Activated CD4-positive, alpha-beta T cell treated with anti-CD3 and anti-CD28 coated beads for 36 hours (primary cell): ENCODE measurements at regions of chr2 and their contacts with region 1.

Region 1: GRCh38 chr2:47323009-47323821 is 79.7 kb upstream of the MSH2 start:
- DNase-seq: peak; percentile 82
- ATAC-seq: peak; percentile 98
- H3K4me3 Mint-ChIP-seq: no peak overlapping the region
- H3K27ac Mint-ChIP-seq: no peak overlapping the region
- H3K4me1 Mint-ChIP-seq: no peaks in the 10 kb centered on the region
- H3K27me3 Mint-ChIP-seq: peaks cover 2% of the 10 kb centered on the region

Region 2: DNA sequence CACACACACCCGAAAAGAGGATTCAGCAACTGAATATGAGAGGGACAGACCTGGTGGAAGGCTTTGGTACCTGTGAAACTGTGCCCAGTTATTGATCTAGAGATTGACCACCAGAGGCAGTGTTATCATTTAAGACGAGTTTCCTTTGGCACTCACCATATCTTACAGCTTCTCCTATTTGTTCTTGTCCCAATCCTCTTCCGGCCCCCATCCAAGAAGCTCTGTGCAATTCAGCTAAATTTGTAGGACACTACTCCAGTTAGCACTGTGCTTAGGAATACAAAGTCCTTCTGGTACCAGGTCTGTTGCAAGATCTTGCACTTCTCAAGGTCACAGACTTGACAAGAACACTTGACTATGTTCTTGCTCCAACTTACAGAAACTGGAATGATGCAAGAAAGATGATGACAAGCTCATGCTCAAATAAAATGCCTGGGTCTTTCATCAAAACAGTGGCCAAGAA is 666.1 kb before region 1 on chr2:
- CTCF ChIA-PET with region 1: no interaction called
- POLR2A ChIA-PET with region 1: no interaction called
- intact Hi-C with region 1: loop called (anchors 5 to 10 kb)
- DNase-seq: no peak
- ATAC-seq: peak; percentile 66
- H3K4me3 Mint-ChIP-seq: no peak overlapping the region
- H3K27ac Mint-ChIP-seq: no peak overlapping the region
- H3K4me1 Mint-ChIP-seq: no peaks in the 10 kb centered on the region
- H3K27me3 Mint-ChIP-seq: peaks cover 7% of the 10 kb centered on the region

Region 3: DNA sequence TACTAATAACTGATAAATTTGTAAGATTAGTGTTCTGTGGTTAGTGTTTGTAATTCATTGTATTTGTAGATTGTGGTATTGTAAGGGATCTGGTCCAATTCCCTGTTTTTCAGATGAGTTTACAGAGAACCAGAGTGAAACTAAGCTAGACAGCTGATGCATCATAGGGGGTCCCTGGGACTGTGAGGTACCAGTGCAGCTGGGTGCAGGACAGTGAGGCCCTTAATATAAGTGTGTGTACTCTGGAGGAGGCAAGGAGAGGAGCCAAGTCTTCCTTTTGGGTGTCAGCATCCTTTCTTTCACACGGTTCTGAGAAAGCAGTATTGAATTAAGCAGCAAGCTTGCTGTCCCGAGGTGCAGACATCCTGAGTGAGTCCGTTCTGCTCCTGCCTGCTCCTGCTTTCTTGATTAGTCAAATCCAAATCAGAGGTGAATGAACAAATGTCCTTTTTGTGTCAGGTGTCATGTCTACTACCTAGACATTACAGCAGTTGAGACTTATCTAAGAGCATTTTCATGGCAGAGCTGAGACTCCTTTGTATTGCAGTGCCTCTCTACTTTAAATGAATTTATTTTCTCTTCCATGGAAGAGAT is 602.5 kb before region 1 on chr2:
- CTCF ChIA-PET with region 1: no interaction called
- POLR2A ChIA-PET with region 1: no interaction called
- intact Hi-C with region 1: no loop called
- DNase-seq: no peak
- ATAC-seq: peak; percentile 44
- H3K4me3 Mint-ChIP-seq: no peak overlapping the region
- H3K27ac Mint-ChIP-seq: no peak overlapping the region
- H3K4me1 Mint-ChIP-seq: peaks cover 69% of the 10 kb centered on the region
- H3K27me3 Mint-ChIP-seq: no peaks in the 10 kb centered on the region

Region 4: DNA sequence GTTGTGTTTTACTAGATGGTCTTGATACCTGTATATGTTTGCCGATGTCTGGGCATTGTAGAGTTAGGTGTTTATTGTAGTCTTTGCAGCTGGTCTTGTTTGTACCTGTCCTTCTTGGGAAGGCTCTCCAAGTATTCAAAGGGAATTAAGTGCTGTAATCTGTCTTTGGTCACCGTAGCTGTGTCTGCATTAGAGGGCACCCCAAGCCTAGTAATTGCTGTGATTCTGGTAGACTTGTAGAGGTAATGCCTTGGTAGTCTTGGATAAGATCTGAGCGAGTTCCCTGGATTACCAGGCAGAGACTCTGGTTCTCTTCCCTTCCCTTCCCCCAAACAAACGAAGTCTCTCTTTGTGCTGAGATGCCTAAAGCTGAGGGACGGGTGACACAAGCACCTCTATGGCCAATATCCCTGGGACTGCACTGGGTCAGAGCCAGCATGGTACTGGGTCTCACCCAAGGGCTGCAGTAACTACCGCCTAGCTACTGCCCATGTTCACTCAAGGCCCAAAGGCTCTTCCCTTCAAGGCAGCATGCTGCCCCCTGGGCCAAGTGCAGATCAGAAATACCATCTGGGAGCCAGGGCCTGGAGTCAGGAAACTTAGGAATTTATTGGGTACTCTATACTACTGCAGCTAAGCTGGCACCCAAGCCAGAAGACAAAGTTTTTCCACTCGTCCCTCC is 195.2 kb before region 1 on chr2:
- CTCF ChIA-PET with region 1: interaction called, 3 read pairs
- POLR2A ChIA-PET with region 1: no interaction called
- intact Hi-C with region 1: loop called in 1 of 2 experiments (anchors 5 kb)
- DNase-seq: no peak
- ATAC-seq: no peak
- H3K4me3 Mint-ChIP-seq: no peak overlapping the region
- H3K27ac Mint-ChIP-seq: no peak overlapping the region
- H3K4me1 Mint-ChIP-seq: no peaks in the 10 kb centered on the region
- H3K27me3 Mint-ChIP-seq: peaks cover 5% of the 10 kb centered on the region

Region 5: DNA sequence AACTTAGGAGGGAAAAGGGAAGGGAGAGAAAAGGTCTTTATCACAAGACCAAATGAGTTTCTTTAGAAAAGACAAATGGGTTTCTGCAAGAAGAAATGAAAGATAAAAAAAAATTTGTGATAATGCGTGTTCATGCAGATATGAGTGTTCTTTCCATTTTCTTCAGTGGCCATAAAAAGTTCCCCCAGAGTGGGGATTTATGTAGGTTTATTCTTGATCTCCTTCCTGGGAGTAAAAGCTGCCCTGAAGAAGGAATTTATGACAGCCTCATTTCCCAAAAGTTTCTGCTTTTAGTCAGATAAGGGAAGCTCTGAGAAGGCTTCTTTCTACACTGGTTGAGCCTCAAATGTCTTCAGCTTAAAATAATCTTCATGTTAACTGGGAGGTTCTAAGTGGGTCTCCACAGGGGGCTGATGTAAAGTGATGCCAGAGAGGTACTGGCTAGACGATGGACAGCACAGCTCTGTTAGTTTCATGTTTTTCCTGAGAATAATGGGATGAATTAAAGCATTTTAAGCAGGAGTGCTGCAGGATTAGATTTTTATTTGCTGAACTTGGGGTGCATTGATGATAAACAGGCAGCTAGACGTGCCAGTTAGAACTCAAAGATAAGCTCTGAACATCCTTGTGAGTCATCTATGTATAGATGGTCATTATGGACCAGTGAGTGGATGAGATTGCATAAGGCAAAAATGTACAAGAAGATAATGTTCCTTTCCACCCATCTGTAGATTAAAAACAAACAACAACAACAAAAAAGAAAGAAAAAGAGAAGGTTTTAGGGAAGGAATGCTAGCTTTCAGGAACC is 19.7 kb before region 1 on chr2:
- CTCF ChIA-PET with region 1: interaction called, 11 read pairs
- POLR2A ChIA-PET with region 1: no interaction called
- intact Hi-C with region 1: no loop called
- DNase-seq: no peak
- ATAC-seq: no peak
- H3K4me3 Mint-ChIP-seq: no peak overlapping the region
- H3K27ac Mint-ChIP-seq: no peak overlapping the region
- H3K4me1 Mint-ChIP-seq: peaks cover 9% of the 10 kb centered on the region
- H3K27me3 Mint-ChIP-seq: peaks cover 12% of the 10 kb centered on the region